Naive thymus-derived CD4-positive, alpha-beta T cell (primary cell): ENCODE measurements at regions of chr11 and their contacts with region 1.

Region 1: DNA sequence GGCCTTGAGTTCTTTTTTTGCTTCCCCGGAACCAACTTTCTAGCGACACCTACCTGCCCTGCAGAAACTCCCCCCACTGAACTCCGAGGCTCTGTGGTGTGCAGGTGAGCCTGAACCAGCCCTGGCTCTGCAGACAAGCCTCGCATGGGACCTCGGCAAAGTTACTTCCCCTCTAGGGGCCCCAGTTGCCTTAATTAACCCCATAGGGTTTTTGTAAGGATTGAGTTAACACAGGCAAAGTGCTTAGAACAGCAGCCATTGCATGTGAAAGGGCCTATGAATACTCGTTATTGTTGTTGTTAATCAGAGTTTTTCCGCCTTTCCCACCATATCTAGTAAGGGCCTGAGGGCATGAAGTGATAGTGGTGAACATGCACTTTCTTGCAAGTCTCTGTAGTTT is 12.6 kb upstream of the SYT13 start:
- DNase-seq: no peak
- ATAC-seq: no peak
- H3K4me3 ChIP-seq: no peak overlapping the region
- H3K4me3 Mint-ChIP-seq: no peak overlapping the region
- H3K27ac ChIP-seq: no peak overlapping the region
- H3K27ac Mint-ChIP-seq: no peak overlapping the region
- H3K4me1 ChIP-seq: no peaks in the 10 kb centered on the region
- H3K4me1 Mint-ChIP-seq: no peaks in the 10 kb centered on the region
- H3K27me3 ChIP-seq: no peaks in the 10 kb centered on the region
- H3K27me3 Mint-ChIP-seq: peaks cover 6 to 23% (median 22%) of the 10 kb centered on the region in 5 donors

Region 2: DNA sequence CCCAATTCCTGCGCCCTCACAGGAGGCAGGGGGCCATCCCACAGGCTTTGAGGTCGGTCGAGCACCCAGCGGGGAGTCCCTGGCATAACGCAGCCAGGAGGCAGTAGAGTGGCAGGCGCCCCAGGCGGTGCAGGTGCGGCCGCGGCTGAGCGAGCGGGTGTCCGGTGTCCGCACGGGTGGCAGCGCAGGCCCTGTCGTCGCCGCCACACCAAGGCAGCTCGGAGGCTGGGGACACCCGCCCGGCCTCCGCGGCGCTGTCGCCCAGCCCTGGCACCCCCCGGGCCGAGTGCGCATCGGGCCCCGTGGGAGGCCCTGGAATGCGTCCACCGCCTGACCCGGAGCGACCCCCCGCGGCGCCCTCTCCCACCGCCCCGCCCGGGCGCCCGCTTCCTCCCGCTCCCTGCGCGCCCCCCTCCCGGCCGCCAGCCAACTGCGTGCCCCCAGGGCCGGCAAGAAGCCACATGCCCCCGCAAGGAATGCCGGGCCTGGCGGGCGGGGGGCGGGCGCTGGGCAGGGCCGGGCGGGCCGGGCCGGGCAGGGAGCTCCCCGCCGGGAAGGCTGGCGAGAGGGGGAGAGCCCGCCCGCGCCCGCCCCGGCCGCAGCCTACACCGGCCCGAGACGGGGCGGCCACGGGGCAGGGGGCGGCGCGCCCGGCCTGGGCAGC is 118.4 kb before region 1 on chr11:
- CTCF ChIA-PET with region 1: no interaction called
- POLR2A ChIA-PET with region 1: no interaction called
- intact Hi-C with region 1: loop called in 1 of 2 experiments (anchors 10 kb)
- DNase-seq: no peak
- ATAC-seq: peak; percentile 53
- H3K4me3 ChIP-seq: peak overlapping the region; percentile 27
- H3K4me3 Mint-ChIP-seq: peak overlapping the region; percentile 15 to 83 (median 80)
- H3K27ac ChIP-seq: no peak overlapping the region
- H3K27ac Mint-ChIP-seq: no peak overlapping the region
- H3K4me1 ChIP-seq: peaks cover 3 to 8% of the 10 kb centered on the region in 2 donors
- H3K4me1 Mint-ChIP-seq: peaks cover 0 to 21% (median 14%) of the 10 kb centered on the region in 7 donors
- H3K27me3 ChIP-seq: peaks cover 0 to 7% of the 10 kb centered on the region in 2 donors
- H3K27me3 Mint-ChIP-seq: peaks cover 23 to 40% (median 27%) of the 10 kb centered on the region in 5 donors

Region 3: DNA sequence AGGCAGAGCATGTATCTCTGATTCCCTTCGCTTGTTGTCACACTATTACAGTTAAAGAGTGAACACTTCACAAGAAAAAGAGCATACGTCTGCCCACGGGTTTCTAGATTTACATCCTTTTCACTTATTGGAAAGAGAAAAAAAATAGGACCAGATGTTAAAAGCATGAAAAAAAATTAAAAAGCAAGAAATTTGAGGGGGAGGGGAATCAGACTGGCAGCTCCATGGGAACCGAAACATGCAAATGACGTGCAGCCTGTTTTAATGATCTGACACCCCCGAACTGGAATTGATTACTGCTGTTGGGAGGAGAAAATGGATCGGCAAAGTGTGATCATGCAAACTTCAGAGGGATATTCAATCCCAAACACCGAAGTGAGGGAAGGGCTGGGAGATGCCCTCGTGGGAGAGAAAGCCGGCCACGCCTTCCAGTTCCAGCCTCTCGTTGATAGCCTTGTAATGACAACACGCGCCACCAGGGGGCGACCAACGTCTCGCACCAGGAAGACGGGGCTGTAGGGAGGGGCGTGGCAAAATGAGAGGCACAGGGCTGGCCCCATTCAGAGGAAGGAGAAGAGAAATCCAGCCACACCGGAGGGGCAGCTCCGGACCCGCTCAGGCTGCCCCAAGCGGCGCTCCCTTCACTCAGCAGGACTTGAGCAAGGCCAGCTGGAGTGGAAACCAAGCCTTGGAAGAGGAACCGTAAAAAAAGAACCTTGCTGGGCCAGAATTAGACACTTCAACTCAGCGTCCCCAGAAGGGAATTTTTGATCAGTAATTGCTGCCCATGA is 41.2 kb after region 1 on chr11:
- CTCF ChIA-PET with region 1: no interaction called
- POLR2A ChIA-PET with region 1: no interaction called
- intact Hi-C with region 1: no loop called
- DNase-seq: peak; percentile 79 to 92 (median 87)
- ATAC-seq: peak; percentile 100
- H3K4me3 ChIP-seq: peak overlapping the region; percentile 47
- H3K4me3 Mint-ChIP-seq: peak overlapping the region; percentile 39 to 86 (median 64)
- H3K27ac ChIP-seq: no peak overlapping the region
- H3K27ac Mint-ChIP-seq: peak overlapping the region in 2 of 9 donors; percentile 57 to 70
- H3K4me1 ChIP-seq: peaks cover 0 to 7% of the 10 kb centered on the region in 2 donors
- H3K4me1 Mint-ChIP-seq: peaks cover 8 to 13% (median 11%) of the 10 kb centered on the region in 7 donors
- H3K27me3 ChIP-seq: no peaks in the 10 kb centered on the region
- H3K27me3 Mint-ChIP-seq: peaks cover 0 to 31% (median 2%) of the 10 kb centered on the region in 5 donors